ENCODE measurements at regions of chr15 and their contacts with region 1.

Region 1: DNA sequence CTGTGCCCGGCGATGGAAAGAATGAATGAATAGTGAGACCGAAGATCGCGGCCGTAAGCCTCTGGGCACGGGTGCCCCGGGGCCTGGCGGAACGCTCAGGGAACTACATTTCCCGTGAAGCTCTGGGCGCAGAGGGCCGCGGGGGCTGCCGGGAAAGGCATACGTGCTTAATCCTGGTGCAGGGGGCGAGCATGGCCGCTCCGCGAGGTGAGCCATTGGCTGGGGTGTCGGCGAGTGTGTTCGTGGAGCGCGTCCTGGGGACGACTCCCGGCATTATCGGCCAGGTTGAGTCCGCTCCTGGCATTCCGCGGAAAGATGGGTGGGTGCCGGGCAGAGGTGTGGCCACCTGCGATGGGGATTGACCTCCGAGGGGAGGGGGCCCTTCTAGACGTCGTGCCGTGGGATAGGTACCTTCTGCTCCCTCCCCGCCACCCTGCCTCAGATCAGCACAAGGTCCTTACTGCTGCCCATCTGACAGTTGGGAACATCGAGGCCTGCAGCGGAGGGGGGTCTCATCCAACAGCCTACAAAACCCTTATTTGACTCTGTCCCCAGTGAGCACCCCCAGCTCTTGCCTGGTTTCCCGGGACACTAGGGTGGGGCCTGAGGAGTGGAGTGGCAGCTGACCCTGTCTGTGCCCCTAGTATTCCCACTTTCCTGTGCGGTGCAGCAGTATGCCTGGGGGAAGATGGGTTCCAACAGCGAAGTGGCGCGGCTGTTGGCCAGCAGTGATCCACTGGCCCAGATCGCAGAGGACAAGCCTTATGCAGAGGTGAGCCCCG is at the start of gene MPI:
- DNase-seq: peak; percentile 97

Region 2: GRCh38 chr15:74842581-74843444 is 47.3 kb before region 1 on chr15 and contains the start of gene ULK3:
- CTCF ChIA-PET with region 1: no interaction called
- POLR2A ChIA-PET with region 1: interaction called, 17 read pairs
- DNase-seq: peak; percentile 98

Region 3: GRCh38 chr15:74869726-74870407 is 20.2 kb before region 1 on chr15:
- CTCF ChIA-PET with region 1: no interaction called
- POLR2A ChIA-PET with region 1: interaction called, 14 read pairs
- DNase-seq: no peak

Region 4: DNA sequence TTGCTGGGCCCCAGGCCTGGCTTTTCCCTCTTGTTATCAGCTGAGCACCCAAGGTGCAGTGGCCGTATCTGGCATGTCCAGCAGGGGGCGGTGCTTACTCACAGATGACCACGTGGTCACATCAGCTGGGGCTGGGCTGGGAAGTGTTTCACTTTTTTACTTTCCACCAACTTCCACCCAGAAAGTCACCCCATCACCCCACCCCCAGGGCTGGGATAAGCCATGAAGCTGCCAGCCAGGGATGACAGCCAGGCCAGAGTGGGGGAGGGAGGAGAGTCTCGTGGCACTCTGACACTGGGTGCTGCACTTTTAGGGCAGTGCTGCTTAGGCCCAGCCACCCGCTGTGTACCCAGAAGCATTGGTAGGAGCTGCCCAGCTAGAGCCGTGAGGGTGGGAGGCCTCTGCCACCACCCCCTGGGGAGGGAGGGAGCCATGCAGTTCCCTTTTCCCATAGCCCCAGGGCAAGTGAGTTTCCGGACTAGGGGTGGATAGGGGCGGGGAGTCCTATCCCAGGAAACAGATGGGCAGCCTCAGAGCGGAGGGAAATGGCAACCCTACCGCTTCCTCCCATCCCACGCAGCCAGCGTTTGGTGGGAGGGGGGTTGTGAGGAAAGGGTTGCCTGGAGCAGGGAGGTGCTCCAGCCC is 139.4 kb after region 1 on chr15:
- CTCF ChIA-PET with region 1: no interaction called
- POLR2A ChIA-PET with region 1: no interaction called
- DNase-seq: peak; percentile 85

Measured in HEK293T (cell line).